Activated naive CD8-positive, alpha-beta T cell treated with anti-CD3 and anti-CD28 coated beads, Interleukin-2, amount 10 ng/mL, durations not matched to agents 7 days and 5 days (primary cell): ENCODE measurements at regions of chr16 and their contacts with region 1.

Region 1: GRCh38 chr16:31458844-31459721 is at the start of gene ARMC5:
- DNase-seq: peak; percentile 95
- ATAC-seq: peak; percentile 66
- H3K4me3 Mint-ChIP-seq: peak within 1 kb of the TSS; percentile 92
- H3K27ac Mint-ChIP-seq: peak within 1 kb of the TSS; percentile 97
- H3K4me1 Mint-ChIP-seq: peaks cover 38% of the 10 kb centered on the region
- H3K27me3 Mint-ChIP-seq: no peaks in the 10 kb centered on the region
- total RNA-seq, gene ARMC5: 12.9 to 13.6 TPM

Region 2: DNA sequence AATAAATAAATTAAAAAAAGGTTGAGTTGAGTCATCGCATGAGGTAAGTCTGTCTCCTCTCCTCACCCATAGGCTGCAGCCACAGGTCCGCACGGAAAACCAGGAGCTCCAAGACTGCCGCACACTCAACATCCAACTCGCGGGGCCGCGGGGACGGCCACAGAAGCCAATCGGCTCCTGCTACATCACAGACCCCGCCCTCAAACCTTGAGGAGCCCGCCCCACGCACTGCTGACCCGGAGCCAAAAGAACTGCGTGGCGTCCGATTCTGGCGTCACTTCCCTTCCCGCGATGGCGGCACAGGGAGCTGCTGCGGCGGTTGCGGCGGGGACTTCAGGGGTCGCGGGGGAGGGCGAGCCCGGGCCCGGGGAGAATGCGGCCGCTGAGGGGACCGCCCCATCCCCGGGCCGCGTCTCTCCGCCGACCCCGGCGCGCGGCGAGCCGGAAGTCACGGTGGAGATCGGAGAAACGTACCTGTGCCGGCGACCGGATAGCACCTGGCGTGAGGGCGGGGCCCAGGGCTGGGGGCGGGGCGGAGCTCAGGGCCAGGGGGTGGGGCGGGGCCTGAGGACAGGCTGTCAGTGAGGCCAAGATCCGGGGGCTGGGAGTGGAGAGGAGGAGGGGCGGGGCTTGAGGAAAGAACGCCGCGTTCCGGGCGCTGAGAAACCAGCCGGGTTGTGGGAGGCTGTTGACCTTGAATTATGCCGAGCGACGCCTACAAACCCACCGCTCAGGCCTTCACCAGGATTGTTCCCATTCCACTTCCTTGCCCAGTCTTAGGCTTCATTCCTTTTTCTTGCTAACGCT is 341.5 kb before region 1 on chr16 and contains the start of gene KAT8:
- POLR2A ChIA-PET with region 1: interaction called, 11 read pairs
- DNase-seq: peak; percentile 95
- ATAC-seq: peak; percentile 94
- H3K4me3 Mint-ChIP-seq: peak within 1 kb of the TSS; percentile 87
- H3K27ac Mint-ChIP-seq: peak within 1 kb of the TSS; percentile 87
- H3K4me1 Mint-ChIP-seq: peaks cover 12% of the 10 kb centered on the region
- H3K27me3 Mint-ChIP-seq: no peaks in the 10 kb centered on the region
- total RNA-seq, gene KAT8: 66.5 to 72.9 TPM

Region 3: GRCh38 chr16:31476303-31477219 is 17.5 kb after region 1 on chr16:
- POLR2A ChIA-PET with region 1: interaction called, 36 read pairs
- DNase-seq: peak; percentile 84
- ATAC-seq: peak; percentile 87
- H3K4me3 Mint-ChIP-seq: peak overlapping the region; percentile 88
- H3K27ac Mint-ChIP-seq: peak overlapping the region; percentile 80
- H3K4me1 Mint-ChIP-seq: peaks cover 10% of the 10 kb centered on the region
- H3K27me3 Mint-ChIP-seq: peaks cover 31% of the 10 kb centered on the region

Region 4: DNA sequence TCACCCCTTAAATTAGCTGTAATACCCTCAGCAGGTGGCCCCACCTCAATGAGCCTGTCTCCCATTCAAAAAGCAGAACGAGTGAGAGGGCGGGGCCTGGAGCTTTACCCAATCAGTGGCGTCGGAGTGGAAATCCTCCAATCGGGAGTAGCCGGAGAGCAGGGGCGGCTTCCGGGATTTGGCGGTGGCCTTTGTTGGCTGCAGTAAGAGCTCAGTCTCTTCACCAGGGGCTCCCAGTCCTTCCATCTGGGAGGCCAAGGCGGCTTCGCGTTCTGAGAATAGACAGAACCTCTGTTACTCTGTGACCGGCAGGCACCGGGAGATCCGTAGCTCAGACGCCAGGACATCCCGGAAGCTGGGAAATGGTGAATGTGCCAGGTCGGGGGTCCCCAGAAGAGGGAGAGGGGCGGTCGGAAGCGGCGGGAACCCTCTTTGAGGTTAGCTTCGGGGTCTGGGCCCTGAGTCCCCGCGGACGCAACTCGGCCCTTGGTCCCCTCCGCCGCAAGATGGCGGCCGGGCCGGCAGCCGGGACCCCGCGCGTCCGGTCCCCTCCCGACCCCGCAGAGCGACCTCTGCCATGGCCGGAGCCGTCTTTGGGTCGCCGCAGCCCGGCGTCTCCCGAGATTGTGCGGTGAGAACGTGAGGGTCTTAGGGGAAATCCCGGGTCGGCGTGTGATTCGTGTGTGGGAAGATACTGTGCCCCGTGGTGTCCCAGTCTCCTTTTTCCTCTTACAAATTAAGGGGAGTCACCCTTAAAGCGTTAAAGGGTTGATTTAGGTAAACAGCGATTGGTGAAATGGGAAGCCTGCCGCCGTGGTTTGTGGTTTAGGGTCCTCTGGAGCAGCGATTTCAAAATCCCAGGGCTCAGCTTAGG is 254.2 kb after region 1 on chr16:
- POLR2A ChIA-PET with region 1: interaction called, 23 read pairs
- DNase-seq: peak; percentile 85
- ATAC-seq: peak; percentile 92
- H3K4me3 Mint-ChIP-seq: peak overlapping the region; percentile 99
- H3K27ac Mint-ChIP-seq: peak overlapping the region; percentile 99
- H3K4me1 Mint-ChIP-seq: peaks cover 33% of the 10 kb centered on the region
- H3K27me3 Mint-ChIP-seq: no peaks in the 10 kb centered on the region